IMR-90 (cell line): ENCODE measurements at regions of chr6 and their contacts with region 1.

Region 1: DNA sequence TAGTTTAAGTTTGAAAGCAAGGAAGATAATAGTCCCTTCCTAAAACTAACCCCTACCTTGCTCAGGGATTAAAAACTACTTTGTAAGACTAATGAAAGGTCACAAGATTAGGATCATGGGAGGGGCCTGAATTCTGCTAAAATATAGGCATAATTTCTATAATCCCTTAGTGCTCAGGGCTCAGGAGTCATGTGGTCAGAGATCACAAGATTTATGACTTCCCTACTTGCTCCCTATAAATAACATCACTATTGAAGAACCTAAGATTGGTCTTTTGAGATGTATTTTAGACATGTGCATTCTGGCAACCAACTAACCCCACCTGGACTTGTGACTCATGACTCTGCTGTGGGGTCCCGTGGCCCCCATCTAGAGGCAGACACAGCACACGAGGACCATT is 81.1 kb downstream of the STMND1 start:
- DNase-seq: no peak
- ATAC-seq: no peak
- H3K4me3 ChIP-seq: no peak overlapping the region
- H3K27ac ChIP-seq: no peak overlapping the region
- H3K4me1 ChIP-seq: no peaks in the 10 kb centered on the region
- H3K27me3 ChIP-seq: peaks cover 2% of the 10 kb centered on the region
- CTCF ChIP-seq: no peak
- POLR2A ChIP-seq: no peak
- RAD21 ChIP-seq: no peak

Region 2: GRCh38 chr6:16741112-16742016 is 441.6 kb before region 1 on chr6:
- CTCF ChIA-PET with region 1: no interaction called
- POLR2A ChIA-PET with region 1: no interaction called
- dilution Hi-C with region 1: no loop called
- in situ Hi-C with region 1: no loop called
- intact Hi-C with region 1: no loop called
- DNase-seq: peak; percentile 98
- ATAC-seq: peak; percentile 88
- H3K4me3 ChIP-seq: peak overlapping the region; percentile 27; the same call in 1 of the 2 replicates
- H3K27ac ChIP-seq: no peak overlapping the region; the same call in 1 of the 2 replicates
- H3K4me1 ChIP-seq: peaks cover 22% of the 10 kb centered on the region
- H3K27me3 ChIP-seq: no peaks in the 10 kb centered on the region
- CTCF ChIP-seq: no peak
- POLR2A ChIP-seq: peak; percentile 68; the same call in 1 of the 2 replicates
- RAD21 ChIP-seq: no peak

Region 3: DNA sequence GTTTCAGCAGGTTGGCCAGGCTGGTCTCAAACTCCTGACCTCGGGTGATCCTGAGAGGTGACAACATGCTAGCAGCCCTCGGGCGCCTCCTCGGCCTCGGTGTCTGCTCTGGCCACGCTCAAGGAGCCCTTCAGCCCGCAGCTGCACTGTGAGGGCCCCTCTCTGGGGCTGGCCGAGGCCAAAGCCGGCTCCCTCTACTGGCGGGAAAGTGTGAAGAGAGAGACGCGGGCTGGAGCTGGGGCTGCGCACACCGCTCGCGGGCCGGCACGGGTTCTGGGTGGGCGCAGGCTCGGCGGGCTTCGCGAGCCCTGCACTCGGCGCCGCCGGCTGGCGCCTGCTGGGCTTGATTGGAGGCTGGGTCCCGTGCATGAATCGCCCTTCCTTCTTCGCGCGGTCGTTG is 17.4 kb after region 1 on chr6:
- CTCF ChIA-PET with region 1: interaction called, 12 read pairs
- POLR2A ChIA-PET with region 1: no interaction called
- dilution Hi-C with region 1: no loop called
- in situ Hi-C with region 1: no loop called
- intact Hi-C with region 1: no loop called
- DNase-seq: no peak
- ATAC-seq: no peak
- H3K4me3 ChIP-seq: no peak overlapping the region
- H3K27ac ChIP-seq: no peak overlapping the region
- H3K4me1 ChIP-seq: peaks cover 1% of the 10 kb centered on the region; the same call in 1 of the 2 replicates
- H3K27me3 ChIP-seq: no peaks in the 10 kb centered on the region
- CTCF ChIP-seq: no peak
- POLR2A ChIP-seq: no peak
- RAD21 ChIP-seq: no peak

Region 4: GRCh38 chr6:17226786-17227233 is 43.8 kb after region 1 on chr6:
- CTCF ChIA-PET with region 1: no interaction called
- POLR2A ChIA-PET with region 1: no interaction called
- dilution Hi-C with region 1: no loop called
- in situ Hi-C with region 1: no loop called
- intact Hi-C with region 1: no loop called
- DNase-seq: peak; percentile 22
- ATAC-seq: no peak
- H3K4me3 ChIP-seq: no peak overlapping the region
- H3K27ac ChIP-seq: no peak overlapping the region
- H3K4me1 ChIP-seq: peaks cover 3% of the 10 kb centered on the region; the same call in 1 of the 2 replicates
- H3K27me3 ChIP-seq: no peaks in the 10 kb centered on the region; the same call in 1 of the 2 replicates
- CTCF ChIP-seq: no peak
- POLR2A ChIP-seq: no peak
- RAD21 ChIP-seq: no peak